IMR-90 (cell line): ENCODE measurements at regions of chr15 and their contacts with region 1.

Region 1: GRCh38 chr15:34810455-34811146 is 15.3 kb upstream of the ACTC1 start:
- DNase-seq: peak; percentile 100
- ATAC-seq: peak; percentile 81
- H3K4me3 ChIP-seq: no peak overlapping the region
- H3K27ac ChIP-seq: peak overlapping the region; percentile 75
- H3K4me1 ChIP-seq: peaks cover 23% of the 10 kb centered on the region
- H3K27me3 ChIP-seq: no peaks in the 10 kb centered on the region
- CTCF ChIP-seq: no peak
- POLR2A ChIP-seq: peak; percentile 78
- RAD21 ChIP-seq: no peak

Region 2: DNA sequence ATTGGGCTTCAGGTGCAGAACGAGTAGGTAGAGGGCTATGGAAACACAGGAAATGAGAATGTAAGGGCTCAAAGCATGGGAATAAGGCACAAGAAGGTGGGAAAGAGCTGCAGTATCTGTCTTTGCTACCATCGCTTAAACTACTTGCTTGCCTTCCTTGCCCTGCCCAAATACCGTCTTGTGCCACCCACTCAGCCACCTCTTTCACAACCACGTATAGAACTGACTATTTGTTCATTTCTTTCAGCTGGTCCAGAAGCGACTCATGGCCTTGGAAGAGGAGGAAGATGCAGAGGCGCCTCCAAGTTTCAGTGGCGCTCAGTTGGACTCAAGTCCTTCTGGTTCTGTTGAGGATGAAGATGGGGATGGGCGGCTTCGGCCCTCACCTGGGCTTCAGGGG is 455.4 kb before region 1 on chr15:
- CTCF ChIA-PET with region 1: no interaction called
- POLR2A ChIA-PET with region 1: no interaction called
- dilution Hi-C with region 1: no loop called
- in situ Hi-C with region 1: no loop called
- intact Hi-C with region 1: no loop called
- DNase-seq: no peak
- ATAC-seq: no peak
- H3K4me3 ChIP-seq: no peak overlapping the region
- H3K27ac ChIP-seq: no peak overlapping the region
- H3K4me1 ChIP-seq: no peaks in the 10 kb centered on the region
- H3K27me3 ChIP-seq: no peaks in the 10 kb centered on the region
- CTCF ChIP-seq: no peak
- POLR2A ChIP-seq: no peak
- RAD21 ChIP-seq: no peak

Region 3: GRCh38 chr15:34725556-34725955 is 85.0 kb before region 1 on chr15:
- CTCF ChIA-PET with region 1: no interaction called
- POLR2A ChIA-PET with region 1: no interaction called
- dilution Hi-C with region 1: no loop called
- in situ Hi-C with region 1: no loop called
- intact Hi-C with region 1: loop called (anchors 5 kb)
- DNase-seq: peak; percentile 23
- ATAC-seq: no peak; the same call in 1 of the 2 replicates
- H3K4me3 ChIP-seq: no peak overlapping the region
- H3K27ac ChIP-seq: no peak overlapping the region
- H3K4me1 ChIP-seq: peaks cover 11% of the 10 kb centered on the region; the same call in 1 of the 2 replicates
- H3K27me3 ChIP-seq: no peaks in the 10 kb centered on the region
- CTCF ChIP-seq: no peak
- POLR2A ChIP-seq: no peak
- RAD21 ChIP-seq: no peak

Region 4: DNA sequence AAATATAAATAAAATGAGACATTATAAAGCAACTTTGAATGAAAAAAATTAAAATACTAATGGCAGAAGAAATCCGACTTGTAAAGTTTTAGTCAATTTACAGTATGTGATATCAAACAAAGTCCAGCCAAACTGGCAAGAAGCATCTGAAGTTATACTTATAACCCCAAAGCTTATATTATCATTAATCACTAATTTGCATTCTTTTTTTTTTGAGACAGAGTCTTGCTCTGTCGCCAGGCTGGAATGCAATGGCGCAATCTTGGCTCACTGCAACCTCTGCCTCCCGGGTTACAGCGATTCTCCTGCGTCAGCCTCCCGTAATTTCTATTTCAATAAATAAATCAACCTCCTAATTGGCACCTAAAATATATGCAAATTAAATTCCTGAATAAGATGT is 78.9 kb after region 1 on chr15:
- CTCF ChIA-PET with region 1: no interaction called
- POLR2A ChIA-PET with region 1: no interaction called
- dilution Hi-C with region 1: no loop called
- in situ Hi-C with region 1: no loop called
- intact Hi-C with region 1: loop called (anchors 1 kb)
- DNase-seq: peak; percentile 38
- ATAC-seq: peak; percentile 22; the same call in 1 of the 2 replicates
- H3K4me3 ChIP-seq: no peak overlapping the region
- H3K27ac ChIP-seq: no peak overlapping the region
- H3K4me1 ChIP-seq: peaks cover 4% of the 10 kb centered on the region
- H3K27me3 ChIP-seq: no peaks in the 10 kb centered on the region
- CTCF ChIP-seq: no peak
- POLR2A ChIP-seq: no peak
- RAD21 ChIP-seq: no peak